Naive thymus-derived CD4-positive, alpha-beta T cell (primary cell): ENCODE measurements at regions of chr6 and their contacts with region 1.

Region 1: DNA sequence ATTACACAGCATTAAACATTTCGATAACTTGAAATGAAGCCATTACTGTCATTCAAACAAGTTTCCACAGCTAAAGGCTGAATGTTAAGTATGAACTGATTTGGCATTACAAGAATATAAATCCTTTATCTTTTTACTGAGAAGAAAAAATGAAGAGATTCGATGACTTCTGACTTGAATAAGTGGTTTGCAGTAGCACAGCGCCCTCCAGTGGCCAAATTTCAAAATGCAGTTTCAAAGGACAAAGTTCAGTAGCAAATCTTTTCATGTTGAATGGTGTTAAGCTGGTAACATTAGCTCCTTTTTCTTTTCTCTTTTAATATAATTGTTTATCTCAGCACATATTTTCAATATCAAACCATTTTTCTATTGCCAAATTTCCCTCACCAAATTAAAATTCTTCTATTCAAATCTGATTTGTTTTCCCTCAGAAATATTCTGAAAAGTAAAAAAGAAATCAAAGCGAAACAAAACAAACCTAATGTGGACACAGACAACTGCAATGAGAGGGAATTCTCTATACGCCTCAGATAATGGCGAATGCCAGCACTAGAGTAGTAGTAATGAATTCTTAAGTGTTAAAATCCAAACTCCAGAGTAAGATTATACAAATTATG is 145.7 kb downstream of the BTBD9 start:
- DNase-seq: peak; percentile 36 to 78 (median 68)
- ATAC-seq: peak; percentile 70
- H3K4me3 ChIP-seq: no peak overlapping the region
- H3K4me3 Mint-ChIP-seq: no peak overlapping the region
- H3K27ac ChIP-seq: no peak overlapping the region
- H3K27ac Mint-ChIP-seq: no peak overlapping the region
- H3K4me1 ChIP-seq: no peaks in the 10 kb centered on the region
- H3K4me1 Mint-ChIP-seq: peaks cover 0 to 5% (median 4%) of the 10 kb centered on the region in 7 donors
- H3K27me3 ChIP-seq: no peaks in the 10 kb centered on the region
- H3K27me3 Mint-ChIP-seq: no peaks in the 10 kb centered on the region

Region 2: DNA sequence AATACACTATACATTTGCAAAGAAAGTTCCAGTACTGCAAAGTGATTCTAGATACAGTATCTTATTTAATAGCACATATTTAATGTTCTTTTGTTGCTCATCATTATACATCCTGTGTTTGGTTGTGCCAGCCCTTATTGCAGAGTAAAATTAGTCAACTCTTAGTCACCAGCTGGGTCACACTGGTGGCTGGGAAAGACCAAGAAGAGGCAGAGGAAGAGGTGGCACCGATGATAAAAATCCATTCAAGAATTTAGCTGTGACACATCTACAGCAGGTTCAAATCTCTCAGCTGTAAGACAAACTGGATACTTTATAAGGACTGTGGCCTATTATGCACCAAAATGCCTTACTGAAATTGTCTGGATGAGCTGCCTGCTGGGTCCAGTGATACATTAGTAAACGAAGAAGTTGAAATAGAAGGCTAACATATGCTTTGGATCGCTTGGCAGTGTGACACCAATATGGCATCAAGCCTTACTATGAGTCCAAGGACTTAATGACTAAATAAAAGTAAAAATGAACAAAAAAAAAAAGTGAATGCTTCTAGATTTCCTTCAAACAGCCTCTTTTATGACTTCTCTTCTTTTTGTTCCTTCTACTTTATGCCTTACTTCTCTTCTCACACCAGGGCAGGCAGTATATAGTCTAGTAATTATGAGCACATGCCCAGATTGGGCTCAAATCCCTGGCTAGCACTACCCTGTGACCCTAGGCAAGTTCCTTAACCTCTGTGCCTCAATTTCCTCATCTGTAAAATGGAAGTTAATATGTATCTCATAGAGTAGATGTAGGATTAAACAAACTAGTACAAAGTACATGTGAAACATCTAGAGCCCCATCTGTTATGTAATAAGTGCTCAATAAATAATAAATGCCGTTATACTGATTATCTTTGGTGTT is 1169.7 kb before region 1 on chr6:
- CTCF ChIA-PET with region 1: interaction called, 5 read pairs
- POLR2A ChIA-PET with region 1: no interaction called
- intact Hi-C with region 1: loop called (anchors 2 to 10 kb)
- DNase-seq: no peak
- ATAC-seq: no peak
- H3K4me3 ChIP-seq: no peak overlapping the region
- H3K4me3 Mint-ChIP-seq: no peak overlapping the region
- H3K27ac ChIP-seq: no peak overlapping the region
- H3K27ac Mint-ChIP-seq: peak overlapping the region in 5 of 9 donors; percentile 2 to 48 (median 11)
- H3K4me1 ChIP-seq: no peaks in the 10 kb centered on the region
- H3K4me1 Mint-ChIP-seq: peaks cover 0 to 16% (median 4%) of the 10 kb centered on the region in 7 donors
- H3K27me3 ChIP-seq: no peaks in the 10 kb centered on the region
- H3K27me3 Mint-ChIP-seq: no peaks in the 10 kb centered on the region

Region 3: DNA sequence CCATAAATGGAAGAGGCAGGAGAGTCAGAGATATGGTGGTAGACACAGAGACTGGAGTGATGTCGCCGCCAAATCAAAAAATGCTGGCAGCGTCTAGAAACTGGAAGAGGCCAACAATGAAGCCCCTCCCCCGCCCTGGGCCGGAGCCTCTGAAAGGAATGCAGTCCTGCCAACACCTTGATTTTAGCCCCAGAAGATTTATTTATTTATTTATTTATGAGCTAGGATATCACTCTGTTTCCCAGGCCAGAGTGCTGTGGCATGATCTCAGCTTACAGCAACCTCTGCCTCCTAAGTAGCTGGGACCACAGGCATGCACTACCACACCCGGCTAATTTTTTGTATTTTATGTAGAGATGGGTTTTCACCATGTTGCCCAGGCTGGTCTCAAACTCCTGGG is 911.7 kb before region 1 on chr6:
- CTCF ChIA-PET with region 1: no interaction called
- POLR2A ChIA-PET with region 1: no interaction called
- intact Hi-C with region 1: loop called in 1 of 2 experiments (anchors 5 kb)
- DNase-seq: no peak
- ATAC-seq: no peak
- H3K4me3 ChIP-seq: no peak overlapping the region
- H3K4me3 Mint-ChIP-seq: no peak overlapping the region
- H3K27ac ChIP-seq: no peak overlapping the region
- H3K27ac Mint-ChIP-seq: peak overlapping the region in 1 of 9 donors; percentile 59
- H3K4me1 ChIP-seq: no peaks in the 10 kb centered on the region
- H3K4me1 Mint-ChIP-seq: no peaks in the 10 kb centered on the region
- H3K27me3 ChIP-seq: no peaks in the 10 kb centered on the region
- H3K27me3 Mint-ChIP-seq: peaks cover 0 to 8% (median 0%) of the 10 kb centered on the region in 5 donors

Region 4: DNA sequence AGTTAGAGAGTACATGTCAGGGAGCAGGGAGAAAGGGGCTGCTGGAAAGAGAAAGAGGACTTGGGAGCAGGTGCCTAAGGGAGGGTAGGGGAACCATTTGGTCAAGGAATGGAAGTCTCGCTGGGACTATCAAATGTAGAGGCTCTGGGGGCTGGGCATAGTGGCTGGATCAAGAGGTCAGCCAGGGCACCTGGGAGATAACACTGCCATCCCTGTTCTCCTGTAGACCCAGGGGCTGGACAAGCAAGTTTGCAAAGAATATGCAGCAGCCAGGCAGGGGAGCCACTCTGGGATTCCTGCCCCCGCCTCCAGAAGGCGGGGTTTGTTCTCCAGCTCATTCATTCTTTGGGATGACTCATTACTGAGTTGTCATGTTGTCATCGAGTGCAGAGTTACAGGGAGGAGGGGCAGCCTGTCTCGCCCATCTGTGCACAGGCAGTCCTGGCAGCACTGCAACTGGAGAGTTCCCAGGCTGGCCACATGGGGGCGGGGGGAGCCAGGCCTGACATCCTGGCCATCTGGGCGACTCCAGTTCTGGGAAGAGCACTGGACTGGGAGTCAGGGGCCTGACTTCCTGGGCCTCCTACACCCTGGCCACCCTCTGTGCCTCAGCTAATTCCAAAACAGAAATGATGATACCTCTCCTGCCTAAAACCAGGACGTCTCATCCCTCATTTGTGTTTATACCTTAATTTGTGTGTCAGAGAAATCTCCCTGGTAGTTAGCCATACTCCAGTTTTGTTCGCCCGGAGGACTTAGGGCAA is 702.7 kb before region 1 on chr6:
- CTCF ChIA-PET with region 1: interaction called, 4 read pairs
- POLR2A ChIA-PET with region 1: no interaction called
- intact Hi-C with region 1: loop called (anchors 1 kb)
- DNase-seq: peak; percentile 29 to 83 (median 59)
- ATAC-seq: peak; percentile 99
- H3K4me3 ChIP-seq: no peak overlapping the region
- H3K4me3 Mint-ChIP-seq: no peak overlapping the region
- H3K27ac ChIP-seq: no peak overlapping the region
- H3K27ac Mint-ChIP-seq: no peak overlapping the region
- H3K4me1 ChIP-seq: no peaks in the 10 kb centered on the region
- H3K4me1 Mint-ChIP-seq: peaks cover 0 to 11% (median 0%) of the 10 kb centered on the region in 7 donors
- H3K27me3 ChIP-seq: no peaks in the 10 kb centered on the region
- H3K27me3 Mint-ChIP-seq: peaks cover 0 to 10% (median 0%) of the 10 kb centered on the region in 5 donors

Region 5: GRCh38 chr6:38570750-38571149 is 76.7 kb after region 1 on chr6:
- CTCF ChIA-PET with region 1: no interaction called
- POLR2A ChIA-PET with region 1: no interaction called
- intact Hi-C with region 1: loop called in 1 of 2 experiments (anchors 2 kb)
- DNase-seq: peak in 4 of 9 donors; percentile 7 to 20 (median 10)
- ATAC-seq: no peak
- H3K4me3 ChIP-seq: no peak overlapping the region
- H3K4me3 Mint-ChIP-seq: peak overlapping the region in 3 of 10 donors; percentile 9 to 77 (median 26)
- H3K27ac ChIP-seq: no peak overlapping the region
- H3K27ac Mint-ChIP-seq: peak overlapping the region in 6 of 9 donors; percentile 68 to 95 (median 89)
- H3K4me1 ChIP-seq: peaks cover 7 to 8% of the 10 kb centered on the region in 2 donors
- H3K4me1 Mint-ChIP-seq: peaks cover 19 to 32% (median 24%) of the 10 kb centered on the region in 7 donors
- H3K27me3 ChIP-seq: no peaks in the 10 kb centered on the region
- H3K27me3 Mint-ChIP-seq: peaks cover 0 to 2% (median 0%) of the 10 kb centered on the region in 5 donors